HEK293T (cell line): ENCODE measurements at regions of chr9 and their contacts with region 1.

Region 1: DNA sequence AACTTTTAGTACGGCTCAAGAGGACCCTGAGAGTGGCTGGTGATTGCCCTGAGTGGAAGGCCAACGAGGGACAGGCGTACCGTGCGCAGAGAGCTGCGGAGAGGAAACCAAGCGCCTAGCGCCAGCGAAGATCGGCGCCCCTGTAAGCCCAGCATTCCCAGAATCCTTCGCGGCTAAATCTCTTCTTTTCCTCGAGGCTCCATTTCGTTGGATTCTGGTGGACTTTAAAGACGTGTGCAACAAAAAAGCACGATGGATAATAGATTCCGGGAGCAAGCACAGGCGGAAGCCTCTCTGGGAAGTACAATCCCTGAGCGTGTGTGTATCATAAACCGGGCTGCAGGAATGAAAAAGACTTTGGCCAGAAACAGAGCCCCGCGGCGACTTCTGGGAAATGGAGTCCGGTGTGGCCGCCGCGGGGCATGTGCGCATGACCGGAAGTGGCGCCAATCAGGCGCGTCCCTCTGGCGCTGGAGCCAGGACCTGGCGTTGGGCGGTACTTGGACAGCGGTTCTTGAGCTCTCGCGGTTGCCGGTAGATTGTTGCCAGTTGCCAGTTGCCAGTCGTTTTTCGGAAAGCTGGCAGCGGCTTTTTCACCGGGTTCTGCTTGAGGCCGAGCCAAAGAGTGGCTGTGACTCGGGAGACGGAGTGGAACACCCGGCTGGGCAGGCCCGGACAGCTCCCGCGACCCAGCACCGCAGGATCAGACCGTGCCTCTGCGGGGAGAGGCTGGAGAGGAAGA is at the start of gene ZNF79:
- DNase-seq: peak; percentile 96

Region 2: DNA sequence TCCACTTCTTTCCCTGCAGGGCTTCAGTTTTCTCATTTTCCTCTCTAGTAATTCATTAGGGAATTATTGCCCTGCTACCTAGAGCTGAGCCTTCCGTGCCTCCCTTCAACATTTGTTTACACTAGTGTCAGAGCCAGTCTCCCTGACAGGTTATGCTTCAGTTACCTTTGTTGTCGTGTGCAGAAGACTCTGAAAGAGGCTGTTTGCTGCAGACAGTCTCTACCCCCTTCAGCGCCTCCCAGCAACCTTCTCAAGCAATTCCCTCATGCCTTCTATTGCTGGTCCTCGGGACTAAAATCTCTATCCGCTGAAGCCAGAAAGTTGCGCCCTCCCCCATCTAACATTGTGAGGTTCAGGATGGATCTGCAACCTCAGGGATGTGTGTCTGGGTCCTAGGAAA is 496.7 kb before region 1 on chr9:
- CTCF ChIA-PET with region 1: interaction called, 10 read pairs
- POLR2A ChIA-PET with region 1: no interaction called
- DNase-seq: no peak

Region 3: GRCh38 chr9:127396808-127397497 is 27.2 kb before region 1 on chr9 and contains the start of gene SLC2A8:
- CTCF ChIA-PET with region 1: interaction called, 3 read pairs
- POLR2A ChIA-PET with region 1: interaction called, 18 read pairs
- DNase-seq: peak; percentile 97

Region 4: GRCh38 chr9:127445851-127446719 is 22.0 kb after region 1 on chr9:
- CTCF ChIA-PET with region 1: no interaction called
- POLR2A ChIA-PET with region 1: interaction called, 13 read pairs
- DNase-seq: no peak

Region 5: GRCh38 chr9:127503947-127504782 is 80.1 kb after region 1 on chr9:
- CTCF ChIA-PET with region 1: no interaction called
- POLR2A ChIA-PET with region 1: no interaction called
- DNase-seq: peak; percentile 83